H1 (cell line): ENCODE measurements at regions of chr1 and their contacts with region 1.

Region 1: GRCh38 chr1:205227584-205228006 is at the start of gene TMCC2:
- DNase-seq: peak; percentile 73 to 97
- H3K4me3 ChIP-seq: peak within 1 kb of the TSS; percentile 59 to 85 (median 73)
- H3K27ac ChIP-seq: no peak within 1 kb of the TSS
- H3K4me1 ChIP-seq: peaks cover 13 to 18% (median 16%) of the 10 kb centered on the region in 4 experiments; a peak in 6 of 7 replicates
- H3K27me3 ChIP-seq: peaks cover 0 to 6% (median 4%) of the 10 kb centered on the region in 4 experiments; a peak in 5 of 7 replicates
- CTCF ChIP-seq: no peak
- EP300 ChIP-seq: no peak
- POLR2A ChIP-seq: peak in 1 of 2 experiments; percentile 45; a peak in 1 of 3 replicates
- RAD21 ChIP-seq: no peak
- total RNA-seq, gene TMCC2: 6.7 and 7.2 TPM in 2 replicates

Region 2: GRCh38 chr1:205129447-205130029 is 98.1 kb before region 1 on chr1:
- CTCF ChIA-PET with region 1: no interaction called
- POLR2A ChIA-PET with region 1: no interaction called
- DNase-seq: no peak
- H3K4me3 ChIP-seq: no peak overlapping the region
- H3K27ac ChIP-seq: no peak overlapping the region
- H3K4me1 ChIP-seq: no peaks in the 10 kb centered on the region
- H3K27me3 ChIP-seq: peaks cover 0 to 2% (median 0%) of the 10 kb centered on the region in 4 experiments; a peak in 1 of 7 replicates
- CTCF ChIP-seq: no peak
- EP300 ChIP-seq: no peak
- POLR2A ChIP-seq: no peak
- RAD21 ChIP-seq: no peak

Region 3: DNA sequence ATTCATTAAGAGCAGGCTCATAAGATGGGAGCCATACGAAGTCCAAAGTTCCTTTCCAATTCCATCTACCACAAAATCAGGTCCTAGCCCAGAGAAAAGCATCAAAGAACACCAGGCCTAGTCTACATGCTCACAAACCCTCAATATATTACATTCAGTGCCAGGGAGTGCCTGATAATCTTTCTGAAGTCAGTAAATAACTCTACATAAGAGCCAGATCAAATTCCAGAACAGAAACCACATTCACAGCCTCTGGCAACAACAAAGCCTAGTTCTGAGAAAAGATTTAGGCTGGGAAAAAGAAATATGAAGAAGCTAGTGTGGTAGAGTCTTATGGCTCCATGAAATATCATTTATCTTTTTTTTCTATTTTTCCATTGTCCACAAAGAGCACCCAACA is 65.3 kb before region 1 on chr1:
- CTCF ChIA-PET with region 1: no interaction called
- POLR2A ChIA-PET with region 1: no interaction called
- DNase-seq: no peak
- H3K4me3 ChIP-seq: no peak overlapping the region
- H3K27ac ChIP-seq: no peak overlapping the region
- H3K4me1 ChIP-seq: no peaks in the 10 kb centered on the region
- H3K27me3 ChIP-seq: no peaks in the 10 kb centered on the region
- CTCF ChIP-seq: no peak
- EP300 ChIP-seq: no peak
- POLR2A ChIP-seq: no peak
- RAD21 ChIP-seq: no peak

Region 4: DNA sequence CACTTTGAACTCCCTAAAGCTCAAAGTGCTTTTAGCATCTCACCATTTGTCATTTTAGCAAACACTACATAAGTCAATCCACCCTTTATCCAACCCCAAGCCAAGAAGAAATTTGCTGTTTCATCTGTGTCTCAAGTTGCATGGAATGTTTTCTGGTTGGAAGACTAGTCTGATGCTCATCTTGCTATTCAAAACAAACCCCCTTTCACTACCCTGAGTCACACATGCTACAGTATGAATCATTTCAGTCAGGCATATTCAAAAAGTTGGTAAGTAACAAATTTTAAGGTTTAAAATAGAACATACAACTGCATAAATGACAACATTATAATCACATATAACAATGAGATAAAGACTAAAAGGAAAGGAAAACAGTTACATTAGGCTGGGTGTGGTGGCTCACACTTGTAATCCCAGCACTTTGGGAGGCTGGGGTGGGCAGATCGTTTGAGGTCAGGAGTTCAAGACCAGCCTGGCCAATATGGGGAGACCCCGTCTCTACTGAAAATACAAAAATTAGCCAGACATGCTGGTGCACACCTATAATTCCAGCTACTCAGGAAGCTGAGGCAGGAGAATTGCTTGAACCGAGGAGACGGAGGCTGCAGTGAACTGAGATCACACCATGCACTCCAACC is 54.7 kb before region 1 on chr1:
- CTCF ChIA-PET with region 1: no interaction called
- POLR2A ChIA-PET with region 1: no interaction called
- DNase-seq: no peak
- H3K4me3 ChIP-seq: no peak overlapping the region
- H3K27ac ChIP-seq: no peak overlapping the region
- H3K4me1 ChIP-seq: no peaks in the 10 kb centered on the region
- H3K27me3 ChIP-seq: no peaks in the 10 kb centered on the region
- CTCF ChIP-seq: no peak
- EP300 ChIP-seq: no peak
- POLR2A ChIP-seq: no peak
- RAD21 ChIP-seq: no peak

Region 5: GRCh38 chr1:205204552-205204951 is 23.0 kb before region 1 on chr1:
- CTCF ChIA-PET with region 1: interaction called, 23 read pairs
- POLR2A ChIA-PET with region 1: interaction called, 3 read pairs
- DNase-seq: no peak
- H3K4me3 ChIP-seq: no peak overlapping the region
- H3K27ac ChIP-seq: no peak overlapping the region
- H3K4me1 ChIP-seq: peaks cover 0 to 10% (median 5%) of the 10 kb centered on the region in 4 experiments
- H3K27me3 ChIP-seq: no peaks in the 10 kb centered on the region
- CTCF ChIP-seq: no peak
- EP300 ChIP-seq: no peak
- POLR2A ChIP-seq: no peak
- RAD21 ChIP-seq: no peak

Region 6: DNA sequence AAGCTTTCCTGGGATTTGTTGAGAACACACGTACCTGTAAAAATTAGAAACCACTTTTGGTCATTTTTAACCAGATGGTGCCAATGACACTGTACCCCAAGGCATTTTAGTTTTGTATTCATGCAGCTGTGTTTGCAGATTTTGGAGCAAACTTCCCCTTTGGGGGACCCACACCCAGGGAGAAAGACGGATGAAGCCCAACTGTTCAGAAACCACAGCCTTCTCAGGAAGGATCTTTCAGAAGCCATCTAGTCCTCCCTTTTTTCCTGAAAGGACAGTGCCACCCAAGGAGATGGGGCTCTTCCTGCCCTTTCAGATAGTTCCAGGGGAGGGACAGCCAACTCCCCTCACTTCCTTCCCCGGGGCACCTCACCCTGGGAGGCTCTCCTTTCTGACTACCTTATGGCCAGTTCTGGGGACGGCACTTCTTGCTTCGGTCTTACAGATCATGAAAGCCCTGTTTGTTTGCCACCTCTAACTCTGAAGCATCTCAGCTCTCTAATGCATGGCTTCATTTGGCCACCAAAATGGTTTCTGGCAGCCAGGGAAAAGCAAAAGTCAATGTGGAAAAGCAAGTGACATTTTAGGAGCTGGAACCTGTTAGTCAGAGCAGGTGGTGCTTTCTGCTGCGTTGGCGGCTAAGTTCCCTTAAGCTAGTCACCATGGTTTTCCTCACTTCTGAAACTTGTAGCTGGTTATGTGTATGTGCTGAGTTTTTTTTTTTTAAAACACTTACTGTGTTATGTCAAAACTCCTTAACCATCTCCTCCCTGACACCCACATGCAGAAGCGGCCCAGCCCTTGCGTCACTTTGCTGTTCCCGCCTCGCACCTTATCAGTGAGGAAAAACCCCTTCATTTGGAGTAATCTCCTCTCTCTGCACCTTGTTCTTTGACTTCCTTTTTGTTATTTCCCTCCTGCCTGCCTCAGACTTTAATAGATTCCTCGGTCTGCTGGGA is 10.2 kb after region 1 on chr1:
- CTCF ChIA-PET with region 1: interaction called, 1,035 read pairs
- POLR2A ChIA-PET with region 1: interaction called, 9 read pairs
- DNase-seq: no peak
- H3K4me3 ChIP-seq: no peak overlapping the region
- H3K27ac ChIP-seq: no peak overlapping the region
- H3K4me1 ChIP-seq: no peaks in the 10 kb centered on the region
- H3K27me3 ChIP-seq: no peaks in the 10 kb centered on the region
- CTCF ChIP-seq: no peak
- EP300 ChIP-seq: no peak
- POLR2A ChIP-seq: no peak
- RAD21 ChIP-seq: no peak